Activated CD4-positive, alpha-beta memory T cell treated with anti-CD3 and anti-CD28 coated beads for 36 hours (primary cell): ENCODE measurements at regions of chr11 and their contacts with region 1.

Region 1: DNA sequence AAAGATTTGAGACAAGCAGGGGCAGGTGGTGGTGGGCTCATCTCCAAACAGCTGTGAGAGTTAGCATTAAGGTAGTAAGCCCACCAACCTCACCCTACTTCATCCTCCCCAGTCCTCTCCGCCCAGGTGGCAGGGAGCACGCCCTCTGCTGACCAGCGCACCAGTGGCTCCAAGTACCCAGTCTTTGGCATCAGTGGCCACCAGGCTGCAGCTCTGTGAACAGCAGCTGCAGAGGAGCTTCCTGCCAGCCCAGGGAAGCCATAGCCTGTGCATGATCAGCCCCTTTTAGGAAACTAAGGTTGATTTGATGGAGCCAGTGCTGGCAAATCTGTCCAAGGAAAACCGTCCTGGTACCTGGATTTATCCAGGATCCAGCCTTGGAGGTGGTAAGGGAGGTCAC is 21.7 kb downstream of the CAVIN3 start:
- DNase-seq: peak; percentile 55
- H3K4me3 Mint-ChIP-seq: no peak overlapping the region
- H3K27ac Mint-ChIP-seq: no peak overlapping the region
- H3K4me1 Mint-ChIP-seq: no peaks in the 10 kb centered on the region
- H3K27me3 Mint-ChIP-seq: peaks cover 5% of the 10 kb centered on the region

Region 2: GRCh38 chr11:6315811-6316425 is 17.3 kb after region 1 on chr11:
- CTCF ChIA-PET with region 1: interaction called, 7 read pairs
- POLR2A ChIA-PET with region 1: no interaction called
- intact Hi-C with region 1: loop called (anchors 2 kb)
- DNase-seq: peak; percentile 53
- H3K4me3 Mint-ChIP-seq: no peak overlapping the region
- H3K27ac Mint-ChIP-seq: no peak overlapping the region
- H3K4me1 Mint-ChIP-seq: peaks cover 16% of the 10 kb centered on the region
- H3K27me3 Mint-ChIP-seq: peaks cover 32% of the 10 kb centered on the region

Region 3: GRCh38 chr11:6333112-6333511 is 34.5 kb after region 1 on chr11:
- CTCF ChIA-PET with region 1: no interaction called
- POLR2A ChIA-PET with region 1: no interaction called
- intact Hi-C with region 1: no loop called
- DNase-seq: no peak
- H3K4me3 Mint-ChIP-seq: no peak overlapping the region
- H3K27ac Mint-ChIP-seq: no peak overlapping the region
- H3K4me1 Mint-ChIP-seq: no peaks in the 10 kb centered on the region
- H3K27me3 Mint-ChIP-seq: peaks cover 14% of the 10 kb centered on the region